Activated CD4-positive, alpha-beta memory T cell treated with anti-CD3 and anti-CD28 coated beads for 36 hours (primary cell): ENCODE measurements at regions of chr22 and their contacts with region 1.

Region 1: GRCh38 chr22:32660292-32660691 is 141.2 kb upstream of the TIMP3 start:
- DNase-seq: peak; percentile 66
- H3K4me3 Mint-ChIP-seq: no peak overlapping the region
- H3K27ac Mint-ChIP-seq: no peak overlapping the region
- H3K4me1 Mint-ChIP-seq: no peaks in the 10 kb centered on the region
- H3K27me3 Mint-ChIP-seq: peaks cover 13% of the 10 kb centered on the region

Region 2: GRCh38 chr22:32612834-32613233 is 47.5 kb before region 1 on chr22:
- CTCF ChIA-PET with region 1: no interaction called
- POLR2A ChIA-PET with region 1: no interaction called
- intact Hi-C with region 1: no loop called
- DNase-seq: no peak
- H3K4me3 Mint-ChIP-seq: no peak overlapping the region
- H3K27ac Mint-ChIP-seq: no peak overlapping the region
- H3K4me1 Mint-ChIP-seq: no peaks in the 10 kb centered on the region
- H3K27me3 Mint-ChIP-seq: peaks cover 9% of the 10 kb centered on the region

Region 3: DNA sequence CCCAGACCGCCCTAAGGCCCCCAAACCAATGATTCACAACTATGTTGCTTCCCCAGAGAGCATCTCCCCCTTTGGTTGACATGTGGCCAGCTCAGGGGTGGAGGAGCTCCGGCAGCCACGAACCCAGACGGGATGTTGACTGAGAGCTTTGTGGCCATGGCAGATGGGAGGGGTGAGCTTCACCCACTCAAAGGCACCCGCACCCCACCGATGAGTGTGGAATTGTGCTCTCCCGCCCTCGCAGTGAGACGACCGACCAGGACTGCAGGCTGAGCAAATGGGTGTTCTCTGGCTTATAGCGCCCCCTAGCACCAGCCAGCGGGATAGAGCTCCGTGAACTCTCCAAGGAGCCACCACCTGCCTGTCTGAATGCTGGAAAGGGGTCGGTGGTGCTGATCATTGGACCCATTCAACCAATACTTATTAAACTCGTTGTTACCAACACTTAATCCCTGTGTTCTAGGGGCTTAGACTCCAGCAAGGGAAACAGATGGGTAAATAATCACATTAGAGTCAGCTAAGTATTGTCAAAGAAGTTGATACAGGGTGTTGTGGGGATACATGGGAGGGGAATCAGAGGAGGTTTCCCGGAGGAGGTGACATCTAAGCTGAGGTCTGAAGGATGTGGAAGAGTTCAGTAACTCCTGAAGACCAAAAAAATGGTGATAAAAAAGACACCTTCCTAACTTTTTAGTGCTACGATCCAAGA is 136.7 kb after region 1 on chr22:
- CTCF ChIA-PET with region 1: interaction called, 110 read pairs
- POLR2A ChIA-PET with region 1: no interaction called
- intact Hi-C with region 1: loop called (anchors 1 kb)
- DNase-seq: peak; percentile 67
- H3K4me3 Mint-ChIP-seq: no peak overlapping the region
- H3K27ac Mint-ChIP-seq: no peak overlapping the region
- H3K4me1 Mint-ChIP-seq: peaks cover 2% of the 10 kb centered on the region
- H3K27me3 Mint-ChIP-seq: peaks cover 35% of the 10 kb centered on the region

Region 4: GRCh38 chr22:32985899-32986765 is 325.8 kb after region 1 on chr22:
- CTCF ChIA-PET with region 1: no interaction called
- POLR2A ChIA-PET with region 1: no interaction called
- intact Hi-C with region 1: loop called (anchors 5 kb)
- DNase-seq: peak; percentile 57
- H3K4me3 Mint-ChIP-seq: no peak overlapping the region
- H3K27ac Mint-ChIP-seq: no peak overlapping the region
- H3K4me1 Mint-ChIP-seq: no peaks in the 10 kb centered on the region
- H3K27me3 Mint-ChIP-seq: peaks cover 4% of the 10 kb centered on the region

Region 5: GRCh38 chr22:33000342-33001280 is 340.3 kb after region 1 on chr22:
- CTCF ChIA-PET with region 1: interaction called, 3 read pairs
- POLR2A ChIA-PET with region 1: no interaction called
- intact Hi-C with region 1: loop called (anchors 5 kb)
- DNase-seq: peak; percentile 48
- H3K4me3 Mint-ChIP-seq: no peak overlapping the region
- H3K27ac Mint-ChIP-seq: no peak overlapping the region
- H3K4me1 Mint-ChIP-seq: peaks cover 2% of the 10 kb centered on the region
- H3K27me3 Mint-ChIP-seq: peaks cover 1% of the 10 kb centered on the region